PC-9 (cell line): ENCODE measurements at regions of chr3 and their contacts with region 1.

Region 1: GRCh38 chr3:35633332-35634124 is 5.8 kb upstream of the ARPP21 start:
- DNase-seq: no peak
- H3K4me3 ChIP-seq: no peak overlapping the region
- H3K27ac ChIP-seq: no peak overlapping the region
- H3K4me1 ChIP-seq: no peaks in the 10 kb centered on the region
- H3K27me3 ChIP-seq: no peaks in the 10 kb centered on the region
- CTCF ChIP-seq: no peak

Region 2: DNA sequence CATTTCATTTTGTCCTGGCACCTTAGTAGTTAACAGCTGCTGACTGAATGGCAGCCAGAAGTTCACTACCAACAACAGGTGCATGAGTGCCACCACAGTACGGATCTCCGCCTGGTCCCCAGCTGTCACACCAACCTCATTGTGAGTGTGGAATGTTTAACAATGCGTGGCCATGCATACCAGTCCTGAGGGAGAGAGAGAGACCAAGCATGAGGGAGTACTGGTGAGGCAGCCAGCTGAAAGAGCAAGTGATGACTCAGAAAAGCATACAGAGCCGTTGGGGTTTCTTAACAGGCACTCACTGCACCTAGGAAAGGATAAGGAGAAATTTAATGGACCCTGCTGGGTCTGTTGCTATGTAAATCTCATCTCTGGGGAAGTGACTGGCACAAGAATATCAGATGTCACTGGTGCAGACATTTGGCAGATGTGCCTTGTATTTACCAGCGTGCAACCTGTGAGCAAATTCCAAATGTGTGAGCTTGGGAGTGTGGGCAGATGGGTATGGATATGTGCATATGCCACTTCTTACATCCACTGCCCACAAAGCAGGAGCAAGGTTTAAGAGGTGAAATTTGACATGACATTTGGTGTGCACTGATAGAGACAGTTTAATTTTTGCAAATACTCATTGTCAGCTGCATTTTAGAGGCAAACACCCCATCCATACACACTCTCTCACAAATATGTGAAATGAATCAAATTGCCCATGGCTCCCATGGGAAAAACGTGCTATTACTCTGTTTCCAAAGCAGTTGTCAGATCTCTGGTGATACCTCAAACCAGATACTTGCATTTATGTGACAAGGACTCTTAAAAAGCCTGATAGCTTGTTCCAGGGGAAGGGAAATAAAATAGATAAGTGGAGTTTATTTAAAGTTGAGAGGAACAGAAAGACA is 239.4 kb before region 1 on chr3:
- CTCF ChIA-PET with region 1: no interaction called
- POLR2A ChIA-PET with region 1: no interaction called
- intact Hi-C with region 1: no loop called
- DNase-seq: no peak
- H3K4me3 ChIP-seq: no peak overlapping the region
- H3K27ac ChIP-seq: no peak overlapping the region
- H3K4me1 ChIP-seq: no peaks in the 10 kb centered on the region
- H3K27me3 ChIP-seq: no peaks in the 10 kb centered on the region
- CTCF ChIP-seq: no peak

Region 3: GRCh38 chr3:35422836-35423601 is 210.5 kb before region 1 on chr3:
- CTCF ChIA-PET with region 1: no interaction called
- POLR2A ChIA-PET with region 1: no interaction called
- intact Hi-C with region 1: no loop called
- DNase-seq: no peak
- H3K4me3 ChIP-seq: no peak overlapping the region
- H3K27ac ChIP-seq: no peak overlapping the region
- H3K4me1 ChIP-seq: no peaks in the 10 kb centered on the region
- H3K27me3 ChIP-seq: no peaks in the 10 kb centered on the region
- CTCF ChIP-seq: no peak

Region 4: GRCh38 chr3:35677797-35678196 is 44.3 kb after region 1 on chr3:
- CTCF ChIA-PET with region 1: no interaction called
- POLR2A ChIA-PET with region 1: no interaction called
- intact Hi-C with region 1: no loop called
- DNase-seq: peak in 1 of 2 experiments; percentile 47
- H3K4me3 ChIP-seq: no peak overlapping the region
- H3K27ac ChIP-seq: no peak overlapping the region
- H3K4me1 ChIP-seq: no peaks in the 10 kb centered on the region
- H3K27me3 ChIP-seq: peaks cover 35% of the 10 kb centered on the region
- CTCF ChIP-seq: no peak

Region 5: GRCh38 chr3:36293716-36294115 is 660.2 kb after region 1 on chr3:
- CTCF ChIA-PET with region 1: no interaction called
- POLR2A ChIA-PET with region 1: no interaction called
- intact Hi-C with region 1: no loop called
- DNase-seq: no peak
- H3K4me3 ChIP-seq: no peak overlapping the region
- H3K27ac ChIP-seq: no peak overlapping the region
- H3K4me1 ChIP-seq: peaks cover 30% of the 10 kb centered on the region
- H3K27me3 ChIP-seq: no peaks in the 10 kb centered on the region
- CTCF ChIP-seq: no peak

Region 6: GRCh38 chr3:36852071-36852470 is 1218.5 kb after region 1 on chr3:
- CTCF ChIA-PET with region 1: interaction called, 21 read pairs
- POLR2A ChIA-PET with region 1: no interaction called
- intact Hi-C with region 1: no loop called
- DNase-seq: no peak
- H3K4me3 ChIP-seq: no peak overlapping the region
- H3K27ac ChIP-seq: no peak overlapping the region
- H3K4me1 ChIP-seq: no peaks in the 10 kb centered on the region
- H3K27me3 ChIP-seq: no peaks in the 10 kb centered on the region; the same call in 1 of the 2 replicates
- CTCF ChIP-seq: no peak